ENCODE measurements at regions of chr11 and their contacts with region 1.

Region 1: GRCh38 chr11:120235024-120235861 is 4.7 kb upstream of the POU2F3 start:
- DNase-seq: no peak
- ATAC-seq: no peak

Region 2: GRCh38 chr11:120108154-120108865 is 126.9 kb before region 1 on chr11:
- intact Hi-C with region 1: no loop called
- DNase-seq: peak; percentile 87
- ATAC-seq: peak; percentile 82

Region 3: DNA sequence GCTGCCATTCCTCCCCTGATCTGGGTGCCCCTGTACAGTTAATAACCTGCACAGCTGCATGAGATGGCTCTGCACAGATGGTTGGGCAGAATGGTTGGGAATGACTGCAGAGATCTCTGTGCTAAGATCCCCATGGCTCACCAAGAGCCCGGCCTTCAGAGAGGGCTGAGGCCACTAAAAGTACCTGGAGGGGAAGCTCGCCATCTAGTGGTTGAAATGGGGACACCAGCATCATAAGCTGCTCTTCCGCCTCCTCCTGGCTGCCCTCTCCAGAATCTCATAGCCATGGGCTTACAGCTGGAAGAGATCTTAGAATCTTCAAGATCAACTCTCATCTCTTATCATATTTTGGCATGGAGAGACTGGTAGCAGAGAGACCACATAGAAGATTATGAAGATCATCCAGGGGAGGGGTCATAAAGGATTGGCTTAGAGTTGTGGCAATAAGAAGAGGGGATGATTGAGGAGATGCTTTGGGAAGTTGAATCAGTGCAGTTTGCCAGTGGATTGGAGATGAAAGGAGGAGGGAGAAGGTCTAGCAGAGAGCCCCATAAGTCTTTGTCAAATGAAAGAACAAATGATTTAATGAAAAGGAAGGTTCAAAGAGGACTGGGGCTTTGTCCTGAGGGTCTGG is 67.9 kb after region 1 on chr11:
- intact Hi-C with region 1: loop called (anchors 5 kb)
- DNase-seq: peak; percentile 72
- ATAC-seq: peak; percentile 80